Caco-2 (cell line): ENCODE measurements at regions of chr3 and their contacts with region 1.

Region 1: DNA sequence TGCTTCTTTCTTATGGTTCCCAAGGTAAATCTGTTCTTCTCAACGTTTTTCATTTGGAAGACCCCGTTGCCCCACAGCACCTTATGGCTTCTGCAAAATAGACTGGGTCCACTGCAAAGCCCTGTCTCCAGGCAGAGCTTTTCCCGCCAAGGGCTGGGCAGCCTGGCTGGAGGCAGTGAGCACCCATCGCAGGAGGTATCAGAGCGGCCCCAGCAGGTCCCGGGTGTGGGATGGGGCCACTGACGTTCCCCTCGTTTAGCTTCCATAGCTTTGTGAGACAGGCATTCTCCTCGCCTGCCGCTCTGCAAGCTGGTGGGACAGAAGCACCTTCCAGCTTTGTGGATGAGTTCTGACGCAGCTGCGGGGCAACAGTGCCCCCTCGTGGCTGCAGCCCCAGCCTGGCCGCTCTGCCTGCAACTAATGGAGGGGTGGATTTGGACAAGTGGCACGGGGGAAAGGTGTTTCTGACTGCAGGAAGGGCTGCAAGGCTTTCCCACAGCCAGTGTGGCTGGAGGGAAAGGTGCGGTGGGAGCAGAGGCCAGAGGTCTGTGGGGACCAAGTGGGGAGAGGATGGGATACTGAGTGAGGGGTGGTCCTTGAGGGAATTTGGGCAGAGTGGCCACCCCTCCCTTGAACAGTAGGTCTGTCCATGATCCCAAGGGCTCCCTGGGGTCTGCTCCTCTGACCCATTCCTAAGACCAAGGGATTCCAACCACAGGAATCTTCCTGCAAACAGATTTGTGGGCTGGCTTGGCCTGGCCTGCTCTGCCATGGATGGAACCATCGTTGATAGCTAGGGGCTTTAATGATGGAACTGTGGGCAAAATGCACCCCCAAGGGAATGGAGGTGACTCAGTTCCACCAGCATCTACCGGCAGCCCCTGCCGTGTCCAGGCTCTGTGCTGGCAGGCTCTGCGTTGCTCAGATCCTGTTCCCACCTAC is 99.4 kb downstream of the FBLN2 start:
- DNase-seq: peak; percentile 81 to 92
- H3K4me3 ChIP-seq: no peak overlapping the region
- H3K4me3 Mint-ChIP-seq: no peak overlapping the region
- H3K27ac Mint-ChIP-seq: peak overlapping the region; percentile 21
- H3K4me1 ChIP-seq: peaks cover 12% of the 10 kb centered on the region
- H3K4me1 Mint-ChIP-seq: peaks cover 6% of the 10 kb centered on the region
- H3K27me3 ChIP-seq: no peaks in the 10 kb centered on the region
- H3K27me3 Mint-ChIP-seq: no peaks in the 10 kb centered on the region
- CTCF ChIP-seq: peak; percentile 93 to 98

Region 2: GRCh38 chr3:13091898-13092611 is 556.3 kb before region 1 on chr3:
- CTCF ChIA-PET with region 1: interaction called, 8 read pairs
- POLR2A ChIA-PET with region 1: no interaction called
- intact Hi-C with region 1: loop called (anchors 1 kb)
- DNase-seq: peak; percentile 80 to 83
- H3K4me3 ChIP-seq: no peak overlapping the region
- H3K4me3 Mint-ChIP-seq: no peak overlapping the region
- H3K27ac Mint-ChIP-seq: no peak overlapping the region
- H3K4me1 ChIP-seq: no peaks in the 10 kb centered on the region
- H3K4me1 Mint-ChIP-seq: no peaks in the 10 kb centered on the region
- H3K27me3 ChIP-seq: no peaks in the 10 kb centered on the region
- H3K27me3 Mint-ChIP-seq: no peaks in the 10 kb centered on the region
- CTCF ChIP-seq: peak; percentile 86 to 96

Region 3: GRCh38 chr3:13461169-13462158 is 186.9 kb before region 1 on chr3:
- CTCF ChIA-PET with region 1: interaction called, 3 read pairs
- POLR2A ChIA-PET with region 1: no interaction called
- intact Hi-C with region 1: loop called (anchors 1 kb)
- DNase-seq: peak; percentile 73 to 74
- H3K4me3 ChIP-seq: no peak overlapping the region
- H3K4me3 Mint-ChIP-seq: no peak overlapping the region
- H3K27ac Mint-ChIP-seq: no peak overlapping the region
- H3K4me1 ChIP-seq: no peaks in the 10 kb centered on the region
- H3K4me1 Mint-ChIP-seq: no peaks in the 10 kb centered on the region
- H3K27me3 ChIP-seq: no peaks in the 10 kb centered on the region
- H3K27me3 Mint-ChIP-seq: peaks cover 3% of the 10 kb centered on the region
- CTCF ChIP-seq: peak; percentile 71

Region 4: DNA sequence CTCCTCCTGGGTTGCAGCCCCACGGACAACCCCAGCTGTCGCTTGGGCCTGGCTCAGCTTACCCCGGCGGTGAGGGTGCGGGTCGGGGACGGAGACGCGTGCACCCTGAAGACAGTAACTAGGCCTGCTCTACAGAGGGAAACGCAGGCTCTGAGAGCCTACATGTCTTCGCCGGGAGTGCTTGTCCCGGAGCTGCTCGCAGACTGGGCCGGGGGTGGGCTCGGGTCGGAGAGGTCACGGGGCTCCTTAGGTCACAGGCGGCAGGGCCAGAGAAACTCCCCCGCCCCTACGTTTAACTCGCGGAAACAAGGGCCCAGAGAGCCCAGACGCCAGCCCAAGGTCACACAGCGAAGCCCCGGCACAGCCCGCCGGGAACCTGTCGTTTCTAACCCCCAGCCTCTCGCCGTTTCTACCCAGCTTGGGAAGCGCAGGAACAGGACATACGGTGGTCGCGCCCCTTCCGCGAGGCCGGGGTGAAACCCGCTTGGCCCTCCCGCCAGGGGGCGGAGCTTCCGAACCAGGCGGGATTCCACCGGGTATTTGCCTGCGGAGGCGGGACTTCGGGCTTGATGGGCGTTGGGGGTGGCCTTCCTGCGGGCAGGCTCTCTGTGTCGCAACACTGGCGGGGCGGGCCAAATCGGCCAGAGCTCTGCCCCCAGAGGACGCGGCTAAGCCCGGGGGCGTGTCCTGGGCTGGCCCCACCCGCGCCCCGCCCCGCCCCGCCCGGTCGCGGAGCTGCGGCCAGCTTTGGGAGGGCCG is 168.6 kb before region 1 on chr3 and contains the start of gene HDAC11:
- CTCF ChIA-PET with region 1: interaction called, 14 read pairs
- POLR2A ChIA-PET with region 1: interaction called, 7 read pairs
- intact Hi-C with region 1: no loop called
- DNase-seq: peak; percentile 98 to 99
- H3K4me3 ChIP-seq: peak within 1 kb of the TSS; percentile 71
- H3K4me3 Mint-ChIP-seq: peak within 1 kb of the TSS; percentile 75
- H3K27ac Mint-ChIP-seq: no peak within 1 kb of the TSS
- H3K4me1 ChIP-seq: peaks cover 9% of the 10 kb centered on the region
- H3K4me1 Mint-ChIP-seq: no peaks in the 10 kb centered on the region
- H3K27me3 ChIP-seq: no peaks in the 10 kb centered on the region
- H3K27me3 Mint-ChIP-seq: no peaks in the 10 kb centered on the region
- CTCF ChIP-seq: no peak
- total RNA-seq, gene HDAC11: 10.5 and 10.9 TPM in 2 replicates

Region 5: DNA sequence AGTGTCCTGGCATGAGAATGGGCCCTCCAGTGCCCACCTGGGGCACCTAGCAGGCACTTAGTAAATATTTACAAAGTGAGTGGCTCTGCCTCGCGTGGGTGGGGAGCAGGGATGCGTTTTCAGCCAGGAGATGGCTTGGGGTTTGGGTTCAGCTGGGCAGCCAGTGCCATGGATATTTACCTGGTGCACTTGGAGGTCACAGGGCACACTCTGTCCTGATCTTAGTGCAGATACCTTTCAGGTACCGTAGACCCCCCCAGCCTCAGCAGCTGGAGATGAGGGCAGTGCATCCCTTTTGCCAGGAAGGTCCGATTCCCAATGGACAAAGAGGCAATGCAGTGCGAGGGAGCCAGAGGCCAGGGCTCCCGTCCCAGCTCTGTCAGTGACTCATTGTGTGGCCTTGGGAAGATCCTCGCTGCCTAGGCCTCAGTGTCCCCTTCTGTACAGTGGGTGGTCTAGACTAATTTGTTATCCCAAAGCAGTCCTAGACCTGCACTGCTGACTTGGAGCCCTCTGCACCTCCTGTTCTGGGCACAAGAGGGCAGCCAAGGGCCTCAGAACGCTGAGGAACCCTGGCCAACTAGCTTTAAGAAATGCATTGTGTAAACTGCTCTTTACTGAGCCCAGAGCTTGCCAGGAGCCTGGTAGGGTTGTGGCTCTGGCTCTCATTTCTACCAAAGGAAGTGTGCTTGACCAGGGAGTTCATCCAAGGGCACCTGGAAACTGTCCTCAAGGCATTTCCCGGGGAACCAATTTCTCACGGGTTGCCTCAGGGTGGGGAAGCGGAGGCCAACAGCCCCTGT is 152.2 kb before region 1 on chr3:
- CTCF ChIA-PET with region 1: interaction called, 115 read pairs
- POLR2A ChIA-PET with region 1: interaction called, 5 read pairs
- intact Hi-C with region 1: loop called (anchors 1 kb)
- DNase-seq: peak; percentile 65 to 83
- H3K4me3 ChIP-seq: no peak overlapping the region
- H3K4me3 Mint-ChIP-seq: no peak overlapping the region
- H3K27ac Mint-ChIP-seq: no peak overlapping the region
- H3K4me1 ChIP-seq: no peaks in the 10 kb centered on the region
- H3K4me1 Mint-ChIP-seq: no peaks in the 10 kb centered on the region
- H3K27me3 ChIP-seq: no peaks in the 10 kb centered on the region
- H3K27me3 Mint-ChIP-seq: no peaks in the 10 kb centered on the region
- CTCF ChIP-seq: peak; percentile 93 to 96

Region 6: GRCh38 chr3:13598926-13599886 is 49.1 kb before region 1 on chr3:
- CTCF ChIA-PET with region 1: interaction called, 9 read pairs
- POLR2A ChIA-PET with region 1: no interaction called
- intact Hi-C with region 1: loop called (anchors 5 kb)
- DNase-seq: no peak
- H3K4me3 ChIP-seq: no peak overlapping the region
- H3K4me3 Mint-ChIP-seq: no peak overlapping the region
- H3K27ac Mint-ChIP-seq: peak overlapping the region; percentile 39
- H3K4me1 ChIP-seq: peaks cover 27% of the 10 kb centered on the region
- H3K4me1 Mint-ChIP-seq: peaks cover 33% of the 10 kb centered on the region
- H3K27me3 ChIP-seq: no peaks in the 10 kb centered on the region
- H3K27me3 Mint-ChIP-seq: no peaks in the 10 kb centered on the region
- CTCF ChIP-seq: no peak

Region 7: DNA sequence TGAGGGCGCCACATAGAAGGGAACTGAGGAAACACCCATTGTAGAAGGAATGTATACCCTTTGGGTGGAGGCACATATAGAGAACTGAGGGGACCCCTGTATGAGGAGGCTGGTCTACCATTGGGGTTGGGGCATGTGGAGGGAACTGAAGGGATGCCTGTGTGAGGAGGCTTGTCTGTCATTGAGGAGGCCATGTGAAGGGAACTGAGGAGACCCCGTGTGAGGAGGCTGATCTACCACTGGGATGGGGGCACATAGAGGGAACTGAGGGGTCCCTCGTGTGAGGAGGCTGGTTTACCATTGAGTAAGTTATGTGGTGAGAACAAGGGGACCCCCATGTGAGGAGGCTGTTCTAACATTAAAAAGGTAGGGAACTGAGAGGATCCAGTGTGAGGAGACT is 56.7 kb after region 1 on chr3:
- CTCF ChIA-PET with region 1: no interaction called
- POLR2A ChIA-PET with region 1: no interaction called
- intact Hi-C with region 1: no loop called
- DNase-seq: peak in 1 of 2 experiments; percentile 5
- H3K4me3 ChIP-seq: no peak overlapping the region
- H3K4me3 Mint-ChIP-seq: no peak overlapping the region
- H3K27ac Mint-ChIP-seq: no peak overlapping the region
- H3K4me1 ChIP-seq: no peaks in the 10 kb centered on the region
- H3K4me1 Mint-ChIP-seq: no peaks in the 10 kb centered on the region
- H3K27me3 ChIP-seq: no peaks in the 10 kb centered on the region
- H3K27me3 Mint-ChIP-seq: peaks cover 23% of the 10 kb centered on the region
- CTCF ChIP-seq: no peak

Region 8: GRCh38 chr3:14124615-14125190 is 476.4 kb after region 1 on chr3 and contains the starts of genes CHCHD4 and TMEM43:
- CTCF ChIA-PET with region 1: interaction called, 3 read pairs
- POLR2A ChIA-PET with region 1: no interaction called
- intact Hi-C with region 1: loop called (anchors 10 kb)
- DNase-seq: peak; percentile 97 to 99
- H3K4me3 ChIP-seq: peak within 1 kb of the TSS; percentile 95
- H3K4me3 Mint-ChIP-seq: peak within 1 kb of the TSS; percentile 91
- H3K27ac Mint-ChIP-seq: peak within 1 kb of the TSS; percentile 94
- H3K4me1 ChIP-seq: peaks cover 12% of the 10 kb centered on the region; the same call in 1 of the 2 replicates
- H3K4me1 Mint-ChIP-seq: peaks cover 18% of the 10 kb centered on the region
- H3K27me3 ChIP-seq: no peaks in the 10 kb centered on the region
- H3K27me3 Mint-ChIP-seq: no peaks in the 10 kb centered on the region
- CTCF ChIP-seq: no peak
- total RNA-seq, gene CHCHD4: 15.3 and 15.9 TPM in 2 replicates
- total RNA-seq, gene TMEM43: 33.0 and 35.2 TPM in 2 replicates